ENCODE measurements at regions of chr1 and their contacts with region 1.

Region 1: DNA sequence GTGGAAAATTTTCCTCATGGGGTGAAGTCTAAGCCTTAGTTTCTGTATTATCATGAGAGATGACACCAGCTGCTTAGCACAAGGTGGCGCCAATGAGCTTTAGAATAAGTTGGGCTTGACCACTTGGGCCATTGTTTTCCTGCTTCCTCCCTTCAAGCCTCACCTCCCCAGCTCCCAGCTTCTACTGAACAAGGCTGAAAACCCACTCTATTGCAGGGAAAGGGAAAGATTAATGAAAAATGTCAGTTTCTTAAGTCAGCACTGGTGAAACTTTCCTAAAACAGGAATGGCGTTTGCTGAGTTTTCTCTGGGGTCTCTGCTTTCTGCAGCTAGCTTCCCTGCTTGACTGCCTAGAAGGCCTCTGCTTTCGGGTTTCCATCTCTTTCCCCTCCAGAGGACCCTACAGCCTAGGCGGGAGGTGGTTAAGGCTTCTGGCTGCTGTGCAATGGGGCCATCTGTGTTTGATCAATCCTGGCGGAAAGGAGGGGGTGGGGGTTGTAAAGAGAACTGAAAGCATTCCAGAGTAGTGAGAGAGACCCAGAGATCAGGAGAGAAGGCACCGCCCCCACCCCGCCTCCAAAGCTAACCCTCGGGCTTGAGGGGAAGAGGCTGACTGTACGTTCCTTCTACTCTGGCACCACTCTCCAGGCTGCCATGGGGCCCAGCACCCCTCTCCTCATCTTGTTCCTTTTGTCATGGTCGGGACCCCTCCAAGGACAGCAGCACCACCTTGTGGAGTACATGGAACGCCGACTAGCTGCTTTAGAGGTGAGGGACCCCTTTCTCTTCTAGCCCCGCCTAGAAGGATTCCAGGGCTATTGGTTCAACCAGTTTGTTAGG is at the start of gene OLFML3:
- DNase-seq: peak; percentile 96
- H3K4me3 ChIP-seq: peak within 1 kb of the TSS; percentile 37 to 55 (median 50)
- H3K27ac ChIP-seq: peak within 1 kb of the TSS; percentile 80 to 91 (median 90)
- H3K4me1 ChIP-seq: peaks cover 0 to 86% (median 69%) of the 10 kb centered on the region in 4 donors
- H3K27me3 ChIP-seq: no peaks in the 10 kb centered on the region
- CTCF ChIP-seq: peak; percentile 70 to 81 (median 77)
- EP300 ChIP-seq: peak in 3 of 4 donors; percentile 40 to 87 (median 51)
- POLR2A ChIP-seq: peak; percentile 83 to 94
- total RNA-seq, gene OLFML3: 94.0 to 149 (median 132) TPM

Region 2: GRCh38 chr1:113928941-113929749 is 49.9 kb before region 1 on chr1 and contains the start of gene HIPK1:
- intact Hi-C with region 1: loop called (anchors 2 kb)
- DNase-seq: peak; percentile 95
- H3K4me3 ChIP-seq: peak within 1 kb of the TSS; percentile 70 to 92 (median 85)
- H3K27ac ChIP-seq: peak within 1 kb of the TSS; percentile 94 to 99 (median 97)
- H3K4me1 ChIP-seq: peaks cover 0 to 51% (median 39%) of the 10 kb centered on the region in 4 donors
- H3K27me3 ChIP-seq: no peaks in the 10 kb centered on the region
- CTCF ChIP-seq: peak in 1 of 4 experiments; percentile 17
- EP300 ChIP-seq: no peak
- POLR2A ChIP-seq: peak; percentile 45 to 63
- total RNA-seq, gene HIPK1: 47.2 to 57.1 (median 49.9) TPM

Region 3: GRCh38 chr1:114152508-114153260 is 173.6 kb after region 1 on chr1:
- intact Hi-C with region 1: loop called (anchors 5 kb)
- DNase-seq: peak; percentile 75
- H3K4me3 ChIP-seq: peak overlapping the region; percentile 24 to 53 (median 42)
- H3K27ac ChIP-seq: no peak overlapping the region
- H3K4me1 ChIP-seq: peaks cover 0 to 35% (median 30%) of the 10 kb centered on the region in 4 donors
- H3K27me3 ChIP-seq: peaks cover 39 to 88% (median 75%) of the 10 kb centered on the region in 3 donors
- CTCF ChIP-seq: no peak
- EP300 ChIP-seq: no peak
- POLR2A ChIP-seq: no peak

Region 4: GRCh38 chr1:114282751-114283403 is 303.8 kb after region 1 on chr1:
- intact Hi-C with region 1: loop called (anchors 1 kb)
- DNase-seq: peak; percentile 94
- H3K4me3 ChIP-seq: no peak overlapping the region
- H3K27ac ChIP-seq: no peak overlapping the region
- H3K4me1 ChIP-seq: no peaks in the 10 kb centered on the region
- H3K27me3 ChIP-seq: no peaks in the 10 kb centered on the region
- CTCF ChIP-seq: peak; percentile 81 to 85 (median 84)
- EP300 ChIP-seq: no peak
- POLR2A ChIP-seq: no peak

Region 5: DNA sequence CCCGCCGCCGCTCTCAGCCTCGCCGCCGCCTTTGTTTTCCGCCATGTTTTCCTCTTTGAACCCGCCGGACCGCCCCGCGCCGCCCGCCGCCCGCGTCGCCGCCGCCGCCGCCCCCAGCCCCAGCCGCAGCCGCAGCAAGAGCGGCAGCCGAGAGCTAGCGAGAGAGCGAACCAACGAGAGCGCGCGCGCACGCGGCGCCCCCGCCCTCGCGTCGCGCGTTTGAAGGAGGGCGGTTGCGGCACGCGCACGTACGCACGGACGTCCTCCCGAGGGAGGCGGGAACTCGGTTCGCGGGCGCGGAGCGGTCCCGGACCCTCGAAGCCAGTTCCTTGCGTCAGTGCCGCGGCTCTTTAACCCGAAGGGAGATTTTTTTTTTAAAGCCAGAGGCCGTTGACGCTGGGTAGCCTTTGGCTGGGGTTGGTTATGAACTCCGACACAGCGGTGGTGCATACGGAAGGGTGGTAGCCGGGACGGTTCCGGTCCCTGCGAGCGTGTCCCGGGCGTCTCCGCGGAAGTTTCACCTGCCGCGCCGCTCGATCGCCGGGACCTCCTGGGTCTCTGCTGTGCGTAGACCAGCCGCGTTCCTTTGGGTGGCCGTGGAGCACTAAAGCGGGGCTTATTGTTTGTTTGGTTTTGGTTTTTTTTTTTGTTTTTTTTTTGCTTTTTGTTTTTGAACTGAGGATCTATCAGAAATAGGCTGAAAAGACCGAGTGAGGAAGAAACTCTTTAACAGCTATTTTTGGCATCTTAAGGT is 532.1 kb after region 1 on chr1 and contains the start of gene TRIM33:
- intact Hi-C with region 1: loop called (anchors 10 kb)
- DNase-seq: peak; percentile 94
- H3K4me3 ChIP-seq: peak within 1 kb of the TSS; percentile 85 to 96 (median 86)
- H3K27ac ChIP-seq: peak within 1 kb of the TSS; percentile 88 to 98 (median 98)
- H3K4me1 ChIP-seq: peaks cover 0 to 40% (median 32%) of the 10 kb centered on the region in 4 donors
- H3K27me3 ChIP-seq: no peaks in the 10 kb centered on the region
- CTCF ChIP-seq: no peak
- EP300 ChIP-seq: peak in 1 of 4 donors; percentile 31
- POLR2A ChIP-seq: peak; percentile 57 to 77
- total RNA-seq, gene TRIM33: 38.7 to 42.0 (median 41.5) TPM